Colonic mucosa (tissue), 4 donors: ENCODE measurements at regions of chr16 and their contacts with region 1.

Region 1: DNA sequence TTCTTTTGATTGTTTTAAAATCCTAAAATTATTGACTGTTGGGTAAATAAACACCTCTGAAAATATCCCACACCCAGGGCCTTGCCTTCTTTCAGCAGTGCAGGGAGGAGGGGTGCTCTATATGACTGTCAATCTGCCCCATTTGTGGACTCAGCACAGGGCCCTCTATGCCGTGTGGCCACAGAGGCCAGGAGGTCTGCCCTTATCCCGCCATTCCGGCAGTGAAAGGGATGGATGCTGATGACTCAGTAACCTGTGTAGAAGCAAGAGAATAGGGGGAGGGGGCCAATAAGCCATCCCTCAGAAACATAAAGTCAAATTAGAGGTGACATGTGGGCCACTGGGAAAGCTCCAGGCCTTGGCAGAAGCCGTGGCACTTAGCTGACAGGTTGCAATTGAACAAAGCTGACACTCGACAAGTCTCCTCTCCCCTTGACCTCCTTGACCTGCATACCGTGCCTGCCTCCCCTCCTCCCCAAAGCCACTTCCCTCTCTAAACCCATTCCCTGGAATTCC is 281.4 kb upstream of the DYNLRB2 start:
- DNase-seq: no peak
- H3K4me3 ChIP-seq: no peak overlapping the region
- H3K27ac ChIP-seq: no peak overlapping the region
- H3K4me1 ChIP-seq: no peaks in the 10 kb centered on the region
- H3K27me3 ChIP-seq: no peaks in the 10 kb centered on the region
- CTCF ChIP-seq: no peak

Region 2: GRCh38 chr16:79402356-79402755 is 857.0 kb before region 1 on chr16:
- intact Hi-C with region 1: loop called (anchors 5 kb)
- DNase-seq: peak; percentile 89
- H3K4me3 ChIP-seq: no peak overlapping the region
- H3K27ac ChIP-seq: peak overlapping the region; percentile 60
- H3K4me1 ChIP-seq: peaks cover 3% of the 10 kb centered on the region
- H3K27me3 ChIP-seq: no peaks in the 10 kb centered on the region
- CTCF ChIP-seq: no peak

Region 3: DNA sequence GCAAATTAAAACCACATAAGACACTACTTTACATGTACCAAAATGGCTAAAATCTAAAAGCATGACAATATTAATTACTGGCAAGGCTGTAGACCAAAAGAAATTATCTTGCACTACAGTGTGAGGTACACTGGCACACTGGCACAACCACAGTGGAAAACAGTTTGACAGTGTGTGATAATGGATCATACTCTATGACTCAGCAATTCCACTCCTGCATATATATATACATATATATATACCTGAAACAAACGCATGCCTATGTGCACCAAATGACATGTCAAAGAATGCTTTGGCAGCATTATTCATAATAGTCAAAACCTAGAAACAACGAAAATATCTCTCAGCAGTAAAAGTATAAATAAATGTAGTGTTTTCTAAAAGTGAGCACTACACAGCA is 276.9 kb after region 1 on chr16:
- intact Hi-C with region 1: no loop called
- DNase-seq: no peak
- H3K4me3 ChIP-seq: no peak overlapping the region
- H3K27ac ChIP-seq: no peak overlapping the region
- H3K4me1 ChIP-seq: no peaks in the 10 kb centered on the region
- H3K27me3 ChIP-seq: no peaks in the 10 kb centered on the region
- CTCF ChIP-seq: no peak

Region 4: GRCh38 chr16:80623356-80623755 is 364.0 kb after region 1 on chr16:
- intact Hi-C with region 1: no loop called
- DNase-seq: no peak
- H3K4me3 ChIP-seq: no peak overlapping the region
- H3K27ac ChIP-seq: no peak overlapping the region
- H3K4me1 ChIP-seq: no peaks in the 10 kb centered on the region
- H3K27me3 ChIP-seq: no peaks in the 10 kb centered on the region
- CTCF ChIP-seq: no peak